Dorsolateral prefrontal cortex (tissue), 120 donors: ENCODE measurements at regions of chr19 and their contacts with region 1.

Region 1: DNA sequence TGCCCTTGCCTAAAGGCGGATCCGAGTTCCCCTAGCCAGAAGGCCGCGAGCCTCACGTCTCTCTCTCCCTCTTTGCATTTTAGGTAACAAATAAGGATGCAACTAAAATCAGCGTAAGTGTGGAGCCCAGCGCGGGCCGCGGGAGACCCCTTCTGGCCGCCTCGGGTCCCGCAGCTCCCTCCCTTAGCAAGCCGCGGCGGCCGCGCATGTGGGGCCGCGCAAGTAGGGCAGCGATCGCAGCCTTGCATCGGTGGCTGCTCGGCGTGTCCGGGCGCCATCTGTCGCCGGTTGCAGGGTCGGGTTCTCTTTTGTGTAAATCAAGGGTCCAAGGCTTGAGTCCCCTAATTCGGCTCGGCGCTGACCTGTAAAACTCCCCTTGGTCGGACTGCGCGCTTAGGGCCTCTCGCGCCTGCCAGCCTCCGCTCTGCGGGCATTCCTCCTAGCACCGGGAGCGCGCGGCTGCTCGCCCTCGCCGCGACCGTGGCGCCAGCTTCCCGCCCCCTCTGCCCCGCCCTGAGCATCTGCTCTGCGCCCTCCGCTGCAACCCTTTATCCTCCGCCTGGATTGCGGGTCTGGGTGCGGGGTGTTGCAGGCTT is 2.7 kb downstream of the VSTM2B start:
- DNase-seq: peak; percentile 76 to 89 (median 84)
- H3K4me3 ChIP-seq: peak overlapping the region; percentile 18 to 78 (median 66)
- H3K27ac ChIP-seq: peak overlapping the region in 57 of 59 donors; percentile 25 to 97 (median 81)
- H3K27me3 ChIP-seq: peaks cover 0 to 61% (median 6%) of the 10 kb centered on the region in 45 donors
- CTCF ChIP-seq: peak; percentile 70 to 98 (median 91)

Region 2: GRCh38 chr19:28737021-28737895 is 791.2 kb before region 1 on chr19:
- intact Hi-C with region 1: loop called (anchors 5 to 10 kb)
- DNase-seq: no peak
- H3K4me3 ChIP-seq: peak overlapping the region in 18 of 59 donors; percentile 1 to 48 (median 24)
- H3K27ac ChIP-seq: peak overlapping the region in 36 of 59 donors; percentile 4 to 87 (median 60)
- H3K27me3 ChIP-seq: no peaks in the 10 kb centered on the region
- CTCF ChIP-seq: peak; percentile 63 to 85 (median 72)

Region 3: GRCh38 chr19:29212648-29213573 is 315.5 kb before region 1 on chr19 and contains the start of gene UQCRFS1:
- intact Hi-C with region 1: loop called (anchors 5 to 10 kb)
- DNase-seq: peak; percentile 87 to 99 (median 92)
- H3K4me3 ChIP-seq: peak within 1 kb of the TSS; percentile 67 to 100 (median 94)
- H3K27ac ChIP-seq: peak within 1 kb of the TSS; percentile 15 to 97 (median 85)
- H3K27me3 ChIP-seq: no peaks in the 10 kb centered on the region
- CTCF ChIP-seq: peak in 31 of 56 donors; percentile 9 to 48 (median 25)
- total RNA-seq, gene UQCRFS1: 15.5 to 46.8 (median 33.1) TPM

Region 4: GRCh38 chr19:29285878-29286277 is 242.6 kb before region 1 on chr19:
- intact Hi-C with region 1: loop called (anchors 5 to 10 kb)
- DNase-seq: peak in 6 of 10 donors; percentile 43 to 71 (median 50)
- H3K4me3 ChIP-seq: no peak overlapping the region
- H3K27ac ChIP-seq: no peak overlapping the region
- H3K27me3 ChIP-seq: peaks cover 0 to 8% (median 0%) of the 10 kb centered on the region in 45 donors
- CTCF ChIP-seq: peak in 51 of 56 donors; percentile 9 to 70 (median 42)

Region 5: DNA sequence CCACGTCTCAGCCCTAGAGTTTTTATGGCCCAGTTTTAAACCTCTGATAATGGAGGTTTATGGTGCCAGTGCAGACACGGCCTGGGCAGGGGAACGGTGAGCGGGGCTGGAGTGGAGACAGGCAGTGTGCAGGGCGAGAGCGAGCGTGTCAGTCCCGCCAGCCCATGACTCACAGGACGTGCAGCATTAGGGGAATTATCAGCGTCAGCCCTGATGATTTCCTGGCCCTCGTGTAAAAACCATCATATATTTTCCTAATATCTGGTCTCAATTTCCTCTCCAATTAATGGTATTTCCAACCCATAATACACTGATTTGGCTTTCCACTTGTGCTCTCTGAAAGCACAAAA is 107.3 kb before region 1 on chr19:
- intact Hi-C with region 1: no loop called
- DNase-seq: no peak
- H3K4me3 ChIP-seq: no peak overlapping the region
- H3K27ac ChIP-seq: no peak overlapping the region
- H3K27me3 ChIP-seq: no peaks in the 10 kb centered on the region
- CTCF ChIP-seq: no peak

Region 6: GRCh38 chr19:29478578-29479565 is 49.6 kb before region 1 on chr19:
- intact Hi-C with region 1: loop called (anchors 5 to 10 kb)
- DNase-seq: peak in 7 of 10 donors; percentile 58 to 73 (median 70)
- H3K4me3 ChIP-seq: no peak overlapping the region
- H3K27ac ChIP-seq: peak overlapping the region in 1 of 59 donors; percentile 36
- H3K27me3 ChIP-seq: no peaks in the 10 kb centered on the region
- CTCF ChIP-seq: peak; percentile 17 to 73 (median 60)

Region 7: DNA sequence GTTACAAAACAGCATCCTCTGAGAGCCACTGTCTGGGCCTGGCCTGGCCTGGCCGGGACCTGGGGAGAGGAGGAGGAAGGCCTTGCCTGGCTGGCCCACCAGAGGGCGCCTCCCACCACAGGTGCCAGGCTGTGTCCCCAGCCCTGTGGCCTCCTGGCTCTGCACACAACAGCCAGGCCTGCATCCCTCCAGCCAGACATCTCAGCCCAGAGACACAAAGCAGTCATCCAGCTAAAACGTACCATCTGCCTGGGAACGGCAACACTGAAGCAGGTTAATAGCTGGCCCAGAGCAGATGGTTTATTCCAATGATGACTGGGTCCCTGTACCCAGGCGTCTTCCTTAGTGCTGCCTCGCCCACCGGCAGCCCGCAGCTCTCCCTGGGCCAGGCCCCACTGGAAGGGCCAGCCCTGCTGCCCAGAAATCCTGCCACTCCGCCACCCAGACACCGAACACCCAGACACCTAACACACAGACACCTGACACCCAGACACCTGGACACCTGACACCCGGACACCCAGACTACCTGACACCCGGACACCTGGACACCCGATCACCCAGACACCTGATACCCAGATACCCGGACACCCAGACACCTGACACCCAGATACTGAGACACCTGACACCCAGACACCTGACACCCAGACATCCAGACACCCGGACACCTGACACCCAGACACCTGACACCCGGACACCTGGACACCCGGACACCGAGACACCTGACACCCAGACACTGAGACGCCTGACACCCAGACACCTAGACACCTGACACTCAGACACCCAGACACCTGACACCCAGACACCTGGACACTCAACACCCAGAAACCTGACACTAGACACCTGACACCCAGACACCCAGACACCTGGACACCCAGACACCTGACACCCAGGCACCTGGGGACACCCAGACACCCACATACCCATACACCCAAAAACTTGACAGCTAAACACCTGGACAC is 166.5 kb after region 1 on chr19:
- intact Hi-C with region 1: loop called in 1 of 2 experiments (anchors 10 kb)
- DNase-seq: peak; percentile 86 to 94 (median 90)
- H3K4me3 ChIP-seq: peak overlapping the region in 1 of 59 donors; percentile 22
- H3K27ac ChIP-seq: peak overlapping the region; percentile 38 to 97 (median 90)
- H3K27me3 ChIP-seq: no peaks in the 10 kb centered on the region
- CTCF ChIP-seq: peak; percentile 69 to 98 (median 92)